ENCODE measurements at regions of chr11 and their contacts with region 1.

Region 1: DNA sequence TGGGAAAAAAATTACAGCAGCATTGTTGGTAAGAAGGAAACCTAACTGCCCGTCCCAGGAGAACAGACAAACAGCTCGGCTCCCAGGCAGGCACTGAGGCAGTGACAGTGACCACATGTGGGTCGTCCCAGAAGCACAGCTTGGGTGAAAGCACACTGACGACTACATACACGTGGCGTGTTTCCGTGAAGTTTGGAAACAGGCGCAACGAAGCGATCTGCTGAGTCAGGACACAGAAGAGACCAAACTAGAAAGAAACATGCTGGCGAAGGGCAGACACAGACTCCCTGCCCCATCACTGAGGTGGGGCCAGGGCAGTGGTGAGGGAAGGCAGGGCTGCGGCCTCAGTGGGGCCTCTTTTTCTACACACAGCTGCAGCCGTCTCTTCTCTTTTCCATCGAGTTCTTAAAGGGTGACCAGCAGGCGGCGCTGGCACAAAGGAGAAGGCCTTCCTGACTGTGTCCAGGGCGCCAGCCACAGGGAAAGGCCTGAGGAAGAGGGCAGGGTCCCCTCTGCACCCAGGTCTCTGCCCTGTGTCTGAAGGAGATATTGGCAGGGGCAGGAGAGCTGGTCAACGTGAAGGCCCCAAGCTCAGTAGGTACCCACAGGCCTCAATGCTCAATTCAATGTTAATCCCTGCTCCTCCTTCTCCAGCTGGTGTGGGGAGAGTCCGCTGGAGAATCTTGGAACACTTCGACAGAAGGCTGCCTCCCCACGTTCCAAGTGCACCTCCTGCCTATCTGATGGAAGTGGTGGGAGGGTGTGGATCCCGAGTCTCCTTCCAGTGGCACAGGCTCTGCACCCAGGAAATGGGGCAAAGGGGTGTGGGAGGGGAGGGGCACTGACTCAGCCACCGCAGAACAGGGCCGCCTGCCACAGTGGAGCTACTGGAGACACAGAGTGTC is 19.9 kb downstream of the CARS1 start:
- DNase-seq: peak; percentile 75 to 89 (median 80)
- H3K4me3 ChIP-seq: no peak overlapping the region
- H3K27ac ChIP-seq: no peak overlapping the region
- H3K4me1 ChIP-seq: peaks cover 0 to 7% (median 5%) of the 10 kb centered on the region in 3 donors
- H3K27me3 ChIP-seq: no peaks in the 10 kb centered on the region
- CTCF ChIP-seq: peak; percentile 82

Region 2: DNA sequence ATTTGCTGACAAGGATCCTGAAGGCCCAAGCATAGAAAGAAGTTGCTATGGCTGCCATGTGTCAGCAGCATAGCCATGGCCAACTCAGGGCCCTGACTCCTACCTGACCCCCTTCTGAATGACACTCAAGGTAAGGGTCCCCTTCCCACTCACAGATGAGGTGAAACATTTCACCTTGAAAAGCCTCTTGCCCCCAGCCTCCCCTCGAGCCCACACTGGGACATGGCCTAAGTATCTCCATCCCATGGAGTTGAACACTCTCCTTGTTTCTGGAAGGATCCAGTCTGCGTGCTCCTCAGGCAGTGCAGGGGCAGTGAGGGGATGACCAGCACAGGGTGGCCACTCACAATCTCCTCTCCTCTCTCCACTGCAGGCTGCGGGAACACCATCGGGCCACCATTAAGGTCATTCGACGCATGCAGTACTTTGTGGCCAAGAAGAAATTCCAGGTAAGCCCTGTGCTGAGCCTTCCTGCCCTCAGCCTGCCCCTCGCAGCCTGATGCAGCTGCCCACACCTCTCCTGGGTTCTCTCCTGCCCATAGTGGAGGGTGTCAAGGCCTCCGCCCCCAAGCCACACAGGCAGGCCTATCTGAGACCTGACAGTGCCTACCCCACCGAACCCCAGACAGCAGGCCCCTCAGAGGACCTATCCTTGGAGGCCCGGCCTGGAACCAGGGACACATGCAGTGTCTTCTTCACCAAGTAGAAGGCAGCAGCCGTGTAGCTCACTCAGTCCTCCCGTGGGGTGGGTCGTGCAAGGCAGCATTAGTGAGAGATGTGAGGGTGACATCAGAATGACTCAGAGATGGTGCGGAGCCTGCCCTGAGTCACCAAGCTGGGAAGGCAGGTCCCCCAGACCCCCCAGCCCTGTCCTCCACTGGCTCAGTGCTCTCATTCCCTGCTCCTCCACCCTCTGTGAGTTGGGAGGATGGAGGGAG is 268.6 kb before region 1 on chr11:
- intact Hi-C with region 1: no loop called
- DNase-seq: peak in 2 of 5 donors; percentile 5 to 50
- H3K4me3 ChIP-seq: no peak overlapping the region
- H3K27ac ChIP-seq: no peak overlapping the region
- H3K4me1 ChIP-seq: no peaks in the 10 kb centered on the region
- H3K27me3 ChIP-seq: no peaks in the 10 kb centered on the region
- CTCF ChIP-seq: no peak

Region 3: GRCh38 chr11:3217676-3218482 is 180.6 kb after region 1 on chr11:
- intact Hi-C with region 1: loop called (anchors 10 kb)
- DNase-seq: peak in 2 of 5 donors; percentile 63 to 77
- H3K4me3 ChIP-seq: no peak overlapping the region
- H3K27ac ChIP-seq: no peak overlapping the region
- H3K4me1 ChIP-seq: no peaks in the 10 kb centered on the region
- H3K27me3 ChIP-seq: no peaks in the 10 kb centered on the region
- CTCF ChIP-seq: no peak